ENCODE measurements at regions of chr11 and their contacts with region 1.

Region 1: GRCh38 chr11:116224154-116224888 is 548.5 kb downstream of the BUD13 start:
- DNase-seq: peak in 1 of 2 experiments; percentile 81
- H3K4me3 ChIP-seq: no peak overlapping the region
- H3K27ac ChIP-seq: no peak overlapping the region
- H3K4me1 ChIP-seq: peaks cover 5 to 11% (median 7%) of the 10 kb centered on the region in 4 experiments; a peak in 5 of 7 replicates
- H3K27me3 ChIP-seq: no peaks in the 10 kb centered on the region; a peak in 1 of 7 replicates
- CTCF ChIP-seq: peak; percentile 43 to 72 (median 66)
- EP300 ChIP-seq: no peak
- POLR2A ChIP-seq: no peak
- RAD21 ChIP-seq: peak; percentile 52 to 68

Region 2: GRCh38 chr11:115926601-115927000 is 297.7 kb before region 1 on chr11:
- CTCF ChIA-PET with region 1: no interaction called
- POLR2A ChIA-PET with region 1: no interaction called
- DNase-seq: no peak
- H3K4me3 ChIP-seq: no peak overlapping the region
- H3K27ac ChIP-seq: no peak overlapping the region
- H3K4me1 ChIP-seq: peaks cover 0 to 10% (median 4%) of the 10 kb centered on the region in 4 experiments; a peak in 4 of 7 replicates
- H3K27me3 ChIP-seq: no peaks in the 10 kb centered on the region
- CTCF ChIP-seq: peak in 1 of 3 experiments; percentile 4; a peak in 1 of 4 replicates
- EP300 ChIP-seq: no peak
- POLR2A ChIP-seq: no peak
- RAD21 ChIP-seq: no peak

Region 3: DNA sequence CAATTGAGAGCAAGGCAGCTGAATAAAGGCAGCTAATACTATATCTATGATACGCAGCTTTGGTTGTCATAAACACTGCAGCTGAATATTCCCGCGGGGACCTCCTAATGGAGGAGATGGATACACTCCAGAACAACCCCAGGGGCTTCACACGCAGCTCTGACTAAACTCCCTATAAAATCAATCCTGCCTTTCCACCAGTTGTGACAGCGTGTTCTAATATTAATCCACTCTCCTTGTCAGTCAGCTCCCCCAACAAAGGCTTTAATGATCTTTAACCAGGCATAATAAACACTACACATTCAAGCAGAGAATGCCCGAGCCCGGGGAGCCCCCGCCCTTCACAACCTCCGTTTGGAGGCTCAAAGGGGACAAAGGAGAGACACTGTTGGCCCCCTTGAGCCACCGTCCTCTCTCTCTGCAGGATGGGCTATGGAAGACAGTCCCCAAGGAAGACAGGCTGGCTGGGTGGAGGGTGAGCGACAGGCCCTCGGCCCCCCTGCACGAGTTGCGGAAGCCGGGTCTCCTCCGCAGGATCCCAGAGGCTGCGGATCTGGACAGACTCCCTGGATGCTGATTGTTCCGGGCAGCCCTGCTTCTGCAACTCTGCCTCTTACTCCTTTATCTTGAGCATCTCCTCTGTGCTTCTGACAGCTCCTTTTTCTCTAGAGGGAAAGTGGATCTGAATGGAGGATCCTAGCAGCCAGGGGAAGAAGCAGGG is 16.7 kb before region 1 on chr11:
- CTCF ChIA-PET with region 1: interaction called, 162 read pairs
- POLR2A ChIA-PET with region 1: no interaction called
- DNase-seq: no peak
- H3K4me3 ChIP-seq: no peak overlapping the region
- H3K27ac ChIP-seq: no peak overlapping the region
- H3K4me1 ChIP-seq: no peaks in the 10 kb centered on the region
- H3K27me3 ChIP-seq: no peaks in the 10 kb centered on the region
- CTCF ChIP-seq: no peak
- EP300 ChIP-seq: no peak
- POLR2A ChIP-seq: no peak
- RAD21 ChIP-seq: no peak

Region 4: GRCh38 chr11:116244889-116245288 is 20.6 kb after region 1 on chr11:
- CTCF ChIA-PET with region 1: interaction called, 16 read pairs
- POLR2A ChIA-PET with region 1: interaction called, 4 read pairs
- DNase-seq: no peak
- H3K4me3 ChIP-seq: no peak overlapping the region
- H3K27ac ChIP-seq: no peak overlapping the region
- H3K4me1 ChIP-seq: peaks cover 0 to 10% (median 2%) of the 10 kb centered on the region in 4 experiments; a peak in 3 of 7 replicates
- H3K27me3 ChIP-seq: no peaks in the 10 kb centered on the region
- CTCF ChIP-seq: no peak
- EP300 ChIP-seq: no peak
- POLR2A ChIP-seq: no peak
- RAD21 ChIP-seq: no peak

Region 5: GRCh38 chr11:116263017-116263416 is 38.7 kb after region 1 on chr11:
- CTCF ChIA-PET with region 1: interaction called, 10 read pairs
- POLR2A ChIA-PET with region 1: no interaction called
- DNase-seq: no peak
- H3K4me3 ChIP-seq: no peak overlapping the region
- H3K27ac ChIP-seq: no peak overlapping the region
- H3K4me1 ChIP-seq: peaks cover 0 to 8% (median 4%) of the 10 kb centered on the region in 4 experiments; a peak in 4 of 7 replicates
- H3K27me3 ChIP-seq: 0 out of 7 replicates have a peak, but pooled peaks cover 0 to 2% (median 0%) of the 10 kb centered on the region in 4 experiments
- CTCF ChIP-seq: no peak
- EP300 ChIP-seq: no peak
- POLR2A ChIP-seq: no peak
- RAD21 ChIP-seq: no peak